AG04449 (cell line): ENCODE measurements at regions of chr1 and their contacts with region 1.

Region 1: DNA sequence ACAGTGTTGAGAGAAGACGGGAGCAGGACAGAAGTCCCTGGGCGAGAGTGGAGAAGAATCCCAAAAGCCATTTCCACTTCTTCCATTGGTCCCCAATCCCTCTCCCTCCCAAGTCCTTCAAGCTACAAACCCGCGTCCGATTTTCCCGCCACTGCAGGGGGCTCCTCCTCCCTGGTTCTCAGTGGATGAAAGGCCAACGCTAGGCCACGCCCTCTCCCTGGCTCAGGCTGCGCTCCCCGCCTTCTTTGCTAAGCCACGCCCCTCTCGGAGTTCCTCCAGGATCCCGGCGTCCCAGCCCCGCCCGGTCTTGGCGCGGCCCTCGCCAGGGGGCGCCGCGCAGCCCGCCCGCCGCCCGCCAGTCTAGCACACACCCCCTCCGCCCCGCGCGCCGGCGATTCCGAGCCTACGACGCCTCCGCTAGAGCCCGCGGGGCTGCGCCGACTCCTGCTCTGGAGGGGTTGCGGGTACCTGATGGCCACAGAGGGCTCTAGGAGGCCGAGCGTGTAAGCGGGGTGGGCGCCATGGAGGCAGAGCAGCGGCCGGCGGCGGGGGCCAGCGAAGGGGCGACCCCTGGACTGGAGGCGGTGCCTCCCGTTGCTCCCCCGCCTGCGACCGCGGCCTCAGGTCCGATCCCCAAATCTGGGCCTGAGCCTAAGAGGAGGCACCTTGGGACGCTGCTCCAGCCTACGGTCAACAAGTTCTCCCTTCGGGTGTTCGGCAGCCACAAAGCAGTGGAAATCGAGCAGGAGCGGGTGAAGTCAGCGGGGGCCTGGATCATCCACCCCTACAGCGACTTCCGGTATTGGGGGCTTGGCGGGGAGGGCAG is at the start of gene HCN3:
- DNase-seq: peak; percentile 49
- H3K4me3 ChIP-seq: peak within 1 kb of the TSS; percentile 74
- CTCF ChIP-seq: peak; percentile 57

Region 2: GRCh38 chr1:155091071-155091709 is 186.1 kb before region 1 on chr1:
- CTCF ChIA-PET with region 1: no interaction called
- POLR2A ChIA-PET with region 1: no interaction called
- DNase-seq: no peak
- H3K4me3 ChIP-seq: no peak overlapping the region
- CTCF ChIP-seq: peak; percentile 95

Region 3: GRCh38 chr1:155261852-155262673 is 15.2 kb before region 1 on chr1 and contains the start of gene SCAMP3:
- CTCF ChIA-PET with region 1: interaction called, 112 read pairs
- POLR2A ChIA-PET with region 1: interaction called, 13 read pairs
- DNase-seq: peak; percentile 92
- H3K4me3 ChIP-seq: peak within 1 kb of the TSS; percentile 97
- CTCF ChIP-seq: no peak

Region 4: GRCh38 chr1:155293086-155293749 is 15.9 kb after region 1 on chr1:
- CTCF ChIA-PET with region 1: interaction called, 14 read pairs
- POLR2A ChIA-PET with region 1: interaction called, 6 read pairs
- DNase-seq: no peak
- H3K4me3 ChIP-seq: no peak overlapping the region
- CTCF ChIP-seq: no peak

Region 5: GRCh38 chr1:155308493-155309422 is 31.5 kb after region 1 on chr1 and contains the start of gene FDPS:
- CTCF ChIA-PET with region 1: interaction called, 30 read pairs
- POLR2A ChIA-PET with region 1: interaction called, 3 read pairs
- DNase-seq: peak; percentile 94
- H3K4me3 ChIP-seq: peak within 1 kb of the TSS; percentile 84
- CTCF ChIP-seq: no peak

Region 6: GRCh38 chr1:155323798-155324610 is 46.7 kb after region 1 on chr1:
- CTCF ChIA-PET with region 1: interaction called, 27 read pairs
- POLR2A ChIA-PET with region 1: interaction called, 11 read pairs
- DNase-seq: peak; percentile 70
- H3K4me3 ChIP-seq: peak overlapping the region; percentile 84
- CTCF ChIP-seq: no peak

Region 7: DNA sequence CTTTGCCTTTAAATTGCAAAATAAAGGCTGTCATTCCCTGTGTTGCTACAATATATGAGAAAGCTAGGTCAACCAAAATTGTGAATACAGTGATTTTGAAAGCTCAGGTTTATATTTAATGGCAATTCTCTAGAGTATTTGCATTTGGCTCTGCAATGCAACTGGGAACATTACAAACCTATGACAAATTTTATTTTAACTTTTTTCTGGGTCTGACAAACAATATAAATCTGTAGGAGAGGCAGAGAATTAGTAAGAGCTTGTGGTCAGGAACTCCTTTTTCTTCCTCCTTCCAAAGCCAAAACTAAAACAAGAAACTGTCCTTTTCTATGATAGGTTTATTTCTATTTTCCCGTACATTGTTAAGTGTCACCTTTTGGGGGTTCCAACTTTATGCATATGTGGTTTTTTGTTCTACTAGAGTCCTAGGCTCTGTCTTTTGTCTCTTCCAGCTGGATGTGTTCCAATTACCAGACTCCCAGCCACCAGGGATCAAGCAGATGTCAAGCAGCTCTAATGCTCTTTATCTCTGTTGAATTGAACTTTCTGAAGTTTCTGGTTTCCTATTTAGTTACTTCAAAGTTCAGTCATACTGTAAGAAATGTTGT is 178.4 kb after region 1 on chr1:
- CTCF ChIA-PET with region 1: no interaction called
- POLR2A ChIA-PET with region 1: no interaction called
- DNase-seq: no peak
- H3K4me3 ChIP-seq: no peak overlapping the region
- CTCF ChIP-seq: no peak